ENCODE measurements at regions of chr2 and their contacts with region 1.

Region 1: GRCh38 chr2:45935791-45936622 is 284.5 kb downstream of the PRKCE start:
- DNase-seq: peak; percentile 77
- H3K4me3 Mint-ChIP-seq: no peak overlapping the region
- H3K27ac Mint-ChIP-seq: no peak overlapping the region
- H3K4me1 Mint-ChIP-seq: peaks cover 9% of the 10 kb centered on the region
- H3K27me3 Mint-ChIP-seq: no peaks in the 10 kb centered on the region

Region 2: DNA sequence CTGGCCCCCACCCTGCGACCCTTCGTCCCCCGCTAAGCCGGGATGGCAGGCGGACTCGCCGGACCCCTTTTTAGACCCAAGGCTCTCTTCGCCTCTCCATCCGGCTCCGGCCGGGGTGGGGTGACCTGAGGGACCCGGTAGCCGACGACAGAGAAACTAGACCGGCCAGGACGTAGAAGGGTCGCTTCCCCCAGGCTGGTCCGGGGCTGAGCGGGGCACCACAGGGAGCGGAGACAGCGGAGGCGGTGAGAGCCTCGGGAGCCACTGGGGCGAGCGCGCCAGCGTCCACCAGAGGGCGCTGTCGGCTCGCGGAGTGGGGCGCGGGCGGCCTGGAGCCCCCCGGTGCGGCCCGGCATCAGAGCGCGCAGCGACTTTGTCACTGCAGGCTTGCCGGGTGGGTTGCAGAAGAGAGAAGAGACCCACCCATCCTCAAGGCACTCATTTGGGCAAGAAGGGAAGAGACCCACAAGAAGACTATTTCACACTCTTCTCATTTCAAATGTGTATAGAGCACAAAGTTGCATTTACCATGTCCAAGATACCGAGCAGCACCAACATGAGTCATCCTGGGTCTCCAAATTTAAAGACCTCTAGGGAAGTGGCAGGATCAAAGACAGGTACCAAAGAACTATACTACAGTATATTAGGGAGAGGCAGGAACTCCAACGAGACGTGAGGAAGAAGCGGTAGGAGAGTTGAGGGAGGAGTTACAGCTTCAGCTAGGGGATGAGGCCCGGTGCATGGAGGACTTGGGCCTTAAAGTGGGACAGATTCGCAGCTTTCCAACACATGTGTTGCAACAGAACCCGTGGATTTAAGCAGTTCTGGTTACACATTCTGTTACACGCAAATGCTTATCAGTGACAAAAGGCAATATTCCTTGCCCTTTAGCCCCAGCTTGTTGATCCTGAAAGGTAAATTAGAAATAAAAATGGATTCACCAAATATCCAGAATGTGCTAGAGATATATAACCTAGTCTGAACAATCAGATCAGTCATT is 292.2 kb before region 1 on chr2:
- CTCF ChIA-PET with region 1: interaction called, 10 read pairs
- POLR2A ChIA-PET with region 1: no interaction called
- intact Hi-C with region 1: loop called (anchors 1 kb)
- DNase-seq: peak; percentile 76
- H3K4me3 Mint-ChIP-seq: peak overlapping the region; percentile 47
- H3K27ac Mint-ChIP-seq: no peak overlapping the region
- H3K4me1 Mint-ChIP-seq: peaks cover 10% of the 10 kb centered on the region
- H3K27me3 Mint-ChIP-seq: peaks cover 22% of the 10 kb centered on the region

Measured in activated CD4-positive, alpha-beta memory T cell treated with anti-CD3 and anti-CD28 coated beads for 36 hours (primary cell).